ENCODE measurements at regions of chr3 and their contacts with region 1.

Region 1: DNA sequence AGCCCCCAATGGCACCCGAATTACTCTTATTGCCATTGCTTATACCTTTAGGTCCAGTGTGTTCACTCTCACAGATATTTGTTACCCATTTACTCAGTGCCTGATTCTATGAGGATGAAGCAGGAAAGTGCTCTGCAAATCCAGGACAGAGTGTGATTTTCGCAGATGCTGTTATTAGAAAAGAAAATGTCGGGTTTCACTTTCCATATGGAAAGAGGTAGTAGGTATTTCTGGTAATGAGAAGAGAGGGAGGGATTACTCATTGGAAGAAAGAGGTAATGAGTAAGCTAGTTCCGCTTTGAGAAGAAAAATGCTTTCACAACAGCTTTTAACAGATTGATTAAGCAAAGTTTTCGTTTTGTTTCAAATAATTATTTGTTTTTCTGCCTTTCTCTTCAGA is 336.3 kb upstream of the CFAP20DC start:
- DNase-seq: peak; percentile 24
- H3K4me3 Mint-ChIP-seq: no peak overlapping the region
- H3K27ac Mint-ChIP-seq: peak overlapping the region; percentile 63
- H3K4me1 Mint-ChIP-seq: peaks cover 70% of the 10 kb centered on the region
- H3K27me3 Mint-ChIP-seq: no peaks in the 10 kb centered on the region

Region 2: DNA sequence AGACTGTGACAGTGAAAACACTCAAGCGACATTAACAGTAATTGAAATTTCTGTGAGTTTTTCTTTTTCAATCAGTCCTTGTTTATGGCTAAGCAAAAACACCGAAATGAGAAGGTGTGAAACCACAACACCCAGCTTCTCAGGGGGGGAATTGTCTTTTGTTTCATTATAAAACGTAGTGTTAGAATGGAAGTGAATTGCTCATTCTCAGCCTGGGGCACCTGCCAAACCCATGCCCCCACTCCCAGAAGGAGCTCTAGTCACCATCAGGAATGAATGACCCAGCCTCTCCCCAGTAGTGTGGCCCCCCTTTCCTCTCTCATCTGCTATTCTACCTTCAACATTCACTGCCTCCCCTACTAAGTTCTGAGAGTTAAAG is 150.5 kb before region 1 on chr3:
- CTCF ChIA-PET with region 1: no interaction called
- intact Hi-C with region 1: loop called (anchors 1 kb)
- DNase-seq: peak; percentile 74
- H3K4me3 Mint-ChIP-seq: no peak overlapping the region
- H3K27ac Mint-ChIP-seq: no peak overlapping the region
- H3K4me1 Mint-ChIP-seq: peaks cover 8% of the 10 kb centered on the region
- H3K27me3 Mint-ChIP-seq: no peaks in the 10 kb centered on the region

Region 3: DNA sequence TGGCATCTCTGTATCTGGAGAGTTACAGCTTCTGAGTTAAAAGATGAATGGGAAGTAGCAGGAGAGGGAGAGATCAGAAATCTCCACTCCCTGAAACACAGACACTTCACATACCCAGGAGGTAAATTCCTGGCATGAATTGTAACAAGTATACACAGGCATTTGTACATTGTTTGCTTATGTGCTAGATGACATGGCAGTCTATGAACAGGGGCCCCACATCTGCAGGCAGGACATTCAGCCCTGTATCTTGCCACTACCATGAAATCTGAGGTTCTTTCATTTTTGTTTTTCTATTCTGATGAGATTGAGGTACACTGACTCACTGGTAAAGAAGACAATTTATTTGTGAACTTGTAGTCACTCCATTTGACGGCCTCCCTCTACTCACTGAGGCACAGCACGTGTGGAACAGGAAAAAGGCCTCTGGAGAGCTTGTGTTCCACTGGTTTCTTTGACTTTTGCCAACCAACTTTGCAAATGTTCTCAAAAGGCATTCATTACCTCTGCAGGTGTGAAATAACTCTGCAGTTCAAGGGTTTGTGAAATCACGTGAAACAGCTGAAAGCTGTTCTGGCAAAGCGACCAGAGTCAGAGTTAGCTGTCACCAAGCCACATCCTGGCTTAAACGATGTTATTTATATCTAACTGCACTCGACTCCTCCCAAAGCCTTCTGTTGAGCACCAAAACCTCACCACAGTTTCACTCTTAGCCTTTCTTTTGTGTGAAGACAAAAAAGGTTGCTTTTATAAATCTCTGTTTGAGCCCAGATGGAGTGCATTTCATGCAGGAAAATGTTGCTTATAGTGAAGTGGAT is 65.0 kb after region 1 on chr3:
- CTCF ChIA-PET with region 1: no interaction called
- intact Hi-C with region 1: loop called (anchors 1 kb)
- DNase-seq: peak; percentile 79
- H3K4me3 Mint-ChIP-seq: peak overlapping the region; percentile 41
- H3K27ac Mint-ChIP-seq: peak overlapping the region; percentile 94
- H3K4me1 Mint-ChIP-seq: peaks cover 70% of the 10 kb centered on the region
- H3K27me3 Mint-ChIP-seq: no peaks in the 10 kb centered on the region

Region 4: GRCh38 chr3:59559721-59560435 is 173.7 kb after region 1 on chr3:
- CTCF ChIA-PET with region 1: no interaction called
- intact Hi-C with region 1: loop called (anchors 1 kb)
- DNase-seq: peak; percentile 71
- H3K4me3 Mint-ChIP-seq: no peak overlapping the region
- H3K27ac Mint-ChIP-seq: peak overlapping the region; percentile 84
- H3K4me1 Mint-ChIP-seq: peaks cover 24% of the 10 kb centered on the region
- H3K27me3 Mint-ChIP-seq: no peaks in the 10 kb centered on the region

Region 5: DNA sequence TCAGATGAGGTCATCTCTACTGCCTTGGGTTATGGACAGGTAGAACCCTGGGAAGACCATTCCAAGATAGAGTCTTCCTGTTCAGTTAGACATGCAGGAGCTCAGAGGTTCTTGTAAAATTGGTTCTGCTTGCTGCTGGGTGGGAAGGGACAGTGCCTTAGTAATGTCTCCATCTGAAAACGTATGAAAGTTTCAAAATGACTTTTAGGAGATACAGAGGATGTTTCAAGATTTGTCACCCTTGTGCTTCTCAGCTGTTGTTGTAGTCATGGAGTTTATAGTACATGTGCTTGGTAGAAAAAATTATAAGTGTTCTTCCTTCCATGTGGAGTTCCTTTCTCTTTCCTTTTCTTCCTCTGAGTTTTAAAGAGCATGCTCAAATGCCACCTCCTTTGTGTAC is 548.9 kb after region 1 on chr3:
- CTCF ChIA-PET with region 1: no interaction called
- intact Hi-C with region 1: loop called (anchors 5 kb)
- DNase-seq: peak; percentile 53
- H3K4me3 Mint-ChIP-seq: peak overlapping the region; percentile 50
- H3K27ac Mint-ChIP-seq: peak overlapping the region; percentile 78
- H3K4me1 Mint-ChIP-seq: peaks cover 89% of the 10 kb centered on the region
- H3K27me3 Mint-ChIP-seq: no peaks in the 10 kb centered on the region

Region 6: GRCh38 chr3:60081381-60082095 is 695.4 kb after region 1 on chr3:
- CTCF ChIA-PET with region 1: no interaction called
- intact Hi-C with region 1: loop called (anchors 5 kb)
- DNase-seq: no peak
- H3K4me3 Mint-ChIP-seq: peak overlapping the region; percentile 47
- H3K27ac Mint-ChIP-seq: peak overlapping the region; percentile 98
- H3K4me1 Mint-ChIP-seq: peaks cover 67% of the 10 kb centered on the region
- H3K27me3 Mint-ChIP-seq: no peaks in the 10 kb centered on the region

Measured in activated naive CD4-positive, alpha-beta T cell treated with anti-CD3 and anti-CD28 coated beads for 36 hours (primary cell).